ENCODE measurements at regions of chr4 and their contacts with region 1.

Region 1: GRCh38 chr4:6200011-6200921 is at the start of gene JAKMIP1:
- DNase-seq: peak; percentile 92
- ATAC-seq: peak; percentile 83
- H3K4me3 Mint-ChIP-seq: peak within 1 kb of the TSS; percentile 68
- H3K27ac Mint-ChIP-seq: no peak within 1 kb of the TSS
- H3K4me1 Mint-ChIP-seq: peaks cover 26% of the 10 kb centered on the region
- H3K27me3 Mint-ChIP-seq: peaks cover 42% of the 10 kb centered on the region
- total RNA-seq, gene JAKMIP1: 3.1 to 3.9 TPM

Region 2: DNA sequence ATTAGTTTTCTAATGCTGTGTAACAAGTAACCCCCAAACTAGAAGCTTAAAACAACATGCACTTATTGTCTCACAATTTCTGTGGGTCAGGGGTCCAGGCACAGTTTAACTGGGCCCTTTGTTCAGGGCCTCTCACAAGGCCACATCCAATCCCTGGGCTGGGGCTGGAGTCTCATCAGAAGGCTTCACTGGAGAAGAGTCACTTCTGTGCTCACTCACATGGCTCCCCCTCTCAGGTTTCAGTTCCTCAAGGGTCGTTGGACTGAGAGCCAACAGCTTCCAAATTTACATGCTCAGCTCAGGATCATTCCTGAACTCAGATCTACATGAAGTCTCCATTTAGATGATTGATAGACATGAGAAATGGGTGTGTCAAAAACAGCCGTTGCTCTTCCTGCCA is 412.1 kb before region 1 on chr4:
- CTCF ChIA-PET with region 1: no interaction called
- POLR2A ChIA-PET with region 1: no interaction called
- intact Hi-C with region 1: no loop called
- DNase-seq: no peak
- ATAC-seq: no peak
- H3K4me3 Mint-ChIP-seq: no peak overlapping the region
- H3K27ac Mint-ChIP-seq: no peak overlapping the region
- H3K4me1 Mint-ChIP-seq: no peaks in the 10 kb centered on the region
- H3K27me3 Mint-ChIP-seq: no peaks in the 10 kb centered on the region

Region 3: GRCh38 chr4:6180841-6181631 is 19.2 kb before region 1 on chr4:
- CTCF ChIA-PET with region 1: no interaction called
- POLR2A ChIA-PET with region 1: interaction called, 6 read pairs
- intact Hi-C with region 1: loop called (anchors 1 to 2 kb)
- DNase-seq: peak; percentile 77
- ATAC-seq: peak; percentile 89
- H3K4me3 Mint-ChIP-seq: no peak overlapping the region
- H3K27ac Mint-ChIP-seq: peak overlapping the region; percentile 84
- H3K4me1 Mint-ChIP-seq: peaks cover 65% of the 10 kb centered on the region
- H3K27me3 Mint-ChIP-seq: peaks cover 10% of the 10 kb centered on the region

Measured in activated CD4-positive, alpha-beta T cell treated with anti-CD3 and anti-CD28 coated beads for 36 hours (primary cell).